Sciatic nerve (tissue), 2 donors: ENCODE measurements at regions of chr15 and their contacts with region 1.

Region 1: DNA sequence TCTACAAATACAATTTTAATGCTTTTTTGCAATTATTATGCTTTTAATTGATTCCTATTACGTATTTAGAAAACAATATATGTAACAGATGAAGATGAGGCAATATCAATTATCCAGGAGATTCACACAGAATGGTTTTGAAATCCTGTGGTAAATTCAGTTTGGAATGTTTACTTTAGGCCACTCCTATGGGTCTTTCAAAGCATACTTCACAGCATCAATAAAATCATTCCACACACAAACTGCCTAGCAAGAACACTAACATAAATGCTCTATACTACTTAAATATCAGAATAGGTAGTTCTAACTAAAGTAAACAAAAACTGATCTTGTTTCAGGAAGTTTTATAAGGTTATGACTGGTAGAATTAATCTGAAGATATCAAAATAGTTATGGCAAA is 90.5 kb downstream of the FAM227B start:
- DNase-seq: no peak
- ATAC-seq: no peak

Region 2: GRCh38 chr15:49558924-49559323 is 28.8 kb after region 1 on chr15:
- intact Hi-C with region 1: loop called (anchors 2 kb)
- DNase-seq: no peak
- ATAC-seq: no peak

Region 3: GRCh38 chr15:49573421-49573820 is 43.3 kb after region 1 on chr15:
- intact Hi-C with region 1: no loop called
- DNase-seq: no peak
- ATAC-seq: no peak

Region 4: GRCh38 chr15:49606580-49606979 is 76.5 kb after region 1 on chr15:
- intact Hi-C with region 1: no loop called
- DNase-seq: no peak
- ATAC-seq: no peak